ENCODE measurements at regions of chr9 and their contacts with region 1.

Region 1: GRCh38 chr9:131160416-131161112 is 35.2 kb downstream of the NUP214 start:
- DNase-seq: no peak
- H3K4me3 ChIP-seq: no peak overlapping the region
- H3K27ac ChIP-seq: no peak overlapping the region
- H3K4me1 ChIP-seq: no peaks in the 10 kb centered on the region
- H3K27me3 ChIP-seq: no peaks in the 10 kb centered on the region
- CTCF ChIP-seq: no peak

Region 2: DNA sequence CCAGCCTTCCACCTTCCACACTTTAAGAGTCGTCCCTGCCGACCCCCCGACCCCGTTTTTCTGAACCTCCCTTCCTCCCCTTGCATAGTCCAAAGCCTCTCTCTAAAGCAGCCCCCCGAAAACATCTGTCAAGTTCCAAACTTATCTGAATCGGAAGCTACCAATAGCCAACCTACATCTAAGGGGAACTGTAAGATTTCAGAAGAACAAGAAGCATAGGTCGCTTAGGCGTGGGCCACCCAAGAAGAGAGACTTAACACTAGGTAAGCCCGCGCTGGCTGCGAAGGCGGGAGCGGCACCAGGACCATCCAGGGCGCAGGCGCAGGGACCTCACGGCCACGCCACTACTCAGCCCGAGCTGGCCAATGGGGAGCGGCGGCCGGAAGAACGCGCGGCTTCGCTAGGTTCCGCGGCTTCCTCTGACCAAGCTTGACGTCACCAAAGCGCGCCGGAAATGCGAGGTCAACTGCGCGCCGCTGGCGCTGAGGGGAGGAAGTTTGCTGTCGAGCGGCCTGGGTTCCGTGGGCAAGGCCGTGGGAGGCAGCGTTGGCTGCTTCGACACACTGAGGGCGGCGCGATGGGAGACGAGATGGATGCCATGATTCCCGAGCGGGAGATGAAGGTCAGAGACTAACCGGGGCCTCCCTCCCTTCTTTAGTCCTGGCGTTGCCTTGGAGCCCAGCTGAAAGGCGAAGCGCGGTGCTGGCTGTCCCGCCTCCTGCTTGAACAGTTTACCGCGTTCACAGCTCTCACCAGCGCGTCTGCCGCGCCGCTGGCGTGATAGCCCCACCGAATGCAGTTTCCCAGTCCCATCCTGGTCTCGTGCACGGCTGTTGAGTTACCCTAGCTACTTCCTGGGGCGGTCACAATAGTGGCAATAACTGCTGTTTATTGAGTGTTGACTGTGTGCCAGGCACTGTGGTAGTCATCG is 35.2 kb before region 1 on chr9 and contains the start of gene NUP214:
- intact Hi-C with region 1: loop called (anchors 2 kb)
- DNase-seq: peak; percentile 98 to 99
- H3K4me3 ChIP-seq: peak within 1 kb of the TSS; percentile 64 to 79
- H3K27ac ChIP-seq: peak within 1 kb of the TSS; percentile 81 to 88
- H3K4me1 ChIP-seq: peaks cover 0 to 22% (median 16%) of the 10 kb centered on the region in 4 donors
- H3K27me3 ChIP-seq: no peaks in the 10 kb centered on the region
- CTCF ChIP-seq: no peak

Region 3: GRCh38 chr9:131138676-131139075 is 21.9 kb before region 1 on chr9:
- intact Hi-C with region 1: no loop called
- DNase-seq: no peak
- H3K4me3 ChIP-seq: no peak overlapping the region
- H3K27ac ChIP-seq: no peak overlapping the region
- H3K4me1 ChIP-seq: no peaks in the 10 kb centered on the region
- H3K27me3 ChIP-seq: no peaks in the 10 kb centered on the region
- CTCF ChIP-seq: no peak

Region 4: GRCh38 chr9:131467214-131467935 is 306.8 kb after region 1 on chr9:
- intact Hi-C with region 1: loop called (anchors 5 kb)
- DNase-seq: peak in 1 of 2 donors; percentile 60
- H3K4me3 ChIP-seq: no peak overlapping the region
- H3K27ac ChIP-seq: no peak overlapping the region
- H3K4me1 ChIP-seq: peaks cover 0 to 4% (median 2%) of the 10 kb centered on the region in 4 donors
- H3K27me3 ChIP-seq: no peaks in the 10 kb centered on the region
- CTCF ChIP-seq: no peak

Region 5: DNA sequence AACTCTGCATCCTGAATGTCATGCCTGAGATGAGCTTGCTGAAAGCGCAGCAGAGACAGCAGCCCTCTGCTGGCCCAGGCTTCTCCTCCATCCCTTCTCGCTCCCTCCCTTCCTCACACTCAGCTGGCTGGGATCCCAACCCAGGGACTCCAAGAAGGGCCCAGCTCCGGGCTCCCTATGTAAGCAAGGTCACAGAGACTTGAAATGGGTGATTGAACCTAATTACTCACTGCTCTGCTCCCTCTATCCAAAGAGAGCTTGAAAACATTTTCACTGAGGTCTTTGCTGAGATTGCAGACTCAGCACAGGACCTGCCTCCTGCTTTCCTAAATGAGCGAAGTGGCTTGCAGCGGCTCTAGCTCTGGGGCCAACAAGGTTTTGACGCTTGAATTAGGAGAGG is 536.5 kb after region 1 on chr9:
- intact Hi-C with region 1: no loop called
- DNase-seq: peak in 1 of 2 donors; percentile 43
- H3K4me3 ChIP-seq: no peak overlapping the region
- H3K27ac ChIP-seq: peak overlapping the region; percentile 11 to 13
- H3K4me1 ChIP-seq: peaks cover 0 to 59% (median 34%) of the 10 kb centered on the region in 4 donors
- H3K27me3 ChIP-seq: no peaks in the 10 kb centered on the region
- CTCF ChIP-seq: peak in 1 of 2 experiments; percentile 25